ENCODE measurements at regions of chr2 and their contacts with region 1.

Region 1: GRCh38 chr2:102664471-102664909 is 45.1 kb downstream of the SLC9A2 start:
- DNase-seq: no peak
- ATAC-seq: no peak

Region 2: GRCh38 chr2:104023765-104024164 is 1359.3 kb after region 1 on chr2:
- intact Hi-C with region 1: loop called (anchors 5 kb)
- DNase-seq: no peak
- ATAC-seq: no peak

Measured in sciatic nerve (tissue), 2 donors.